Posterior cingulate gyrus (tissue), 11 donors: ENCODE measurements at regions of chr2 and their contacts with region 1.

Region 1: GRCh38 chr2:64318476-64318748 is 135.6 kb upstream of the LGALSL start:
- DNase-seq: no peak

Region 2: GRCh38 chr2:64062829-64063228 is 255.6 kb before region 1 on chr2:
- intact Hi-C with region 1: loop called (anchors 5 kb)
- DNase-seq: no peak